Ascending aorta (tissue), 2 donors: ENCODE measurements at regions of chr16 and their contacts with region 1.

Region 1: GRCh38 chr16:30922960-30923535 is 324 bp upstream of the FBXL19 start:
- DNase-seq: peak; percentile 99 to 100
- H3K4me3 ChIP-seq: peak overlapping the region; percentile 71 to 82
- H3K27ac ChIP-seq: peak overlapping the region; percentile 95 to 97
- H3K4me1 ChIP-seq: peaks cover 3 to 4% of the 10 kb centered on the region in 2 donors
- H3K27me3 ChIP-seq: no peaks in the 10 kb centered on the region
- CTCF ChIP-seq: no peak

Region 2: GRCh38 chr16:30844671-30845449 is 78.2 kb before region 1 on chr16:
- intact Hi-C with region 1: loop called (anchors 1 kb)
- DNase-seq: peak in 1 of 2 donors; percentile 89
- H3K4me3 ChIP-seq: peak overlapping the region; percentile 17 to 59
- H3K27ac ChIP-seq: peak overlapping the region in 1 of 2 donors; percentile 48
- H3K4me1 ChIP-seq: peaks cover 3 to 6% of the 10 kb centered on the region in 2 donors
- H3K27me3 ChIP-seq: no peaks in the 10 kb centered on the region
- CTCF ChIP-seq: peak; percentile 69 to 91 (median 82)

Region 3: GRCh38 chr16:30893744-30894539 is 29.1 kb before region 1 on chr16 and contains the start of gene BCL7C:
- intact Hi-C with region 1: loop called (anchors 1 kb)
- DNase-seq: peak; percentile 70 to 96
- H3K4me3 ChIP-seq: peak within 1 kb of the TSS; percentile 87 to 93
- H3K27ac ChIP-seq: peak within 1 kb of the TSS; percentile 99
- H3K4me1 ChIP-seq: peaks cover 20 to 32% of the 10 kb centered on the region in 2 donors
- H3K27me3 ChIP-seq: no peaks in the 10 kb centered on the region
- CTCF ChIP-seq: peak; percentile 24 to 61 (median 53)
- total RNA-seq, gene BCL7C: 46.2 TPM

Region 4: DNA sequence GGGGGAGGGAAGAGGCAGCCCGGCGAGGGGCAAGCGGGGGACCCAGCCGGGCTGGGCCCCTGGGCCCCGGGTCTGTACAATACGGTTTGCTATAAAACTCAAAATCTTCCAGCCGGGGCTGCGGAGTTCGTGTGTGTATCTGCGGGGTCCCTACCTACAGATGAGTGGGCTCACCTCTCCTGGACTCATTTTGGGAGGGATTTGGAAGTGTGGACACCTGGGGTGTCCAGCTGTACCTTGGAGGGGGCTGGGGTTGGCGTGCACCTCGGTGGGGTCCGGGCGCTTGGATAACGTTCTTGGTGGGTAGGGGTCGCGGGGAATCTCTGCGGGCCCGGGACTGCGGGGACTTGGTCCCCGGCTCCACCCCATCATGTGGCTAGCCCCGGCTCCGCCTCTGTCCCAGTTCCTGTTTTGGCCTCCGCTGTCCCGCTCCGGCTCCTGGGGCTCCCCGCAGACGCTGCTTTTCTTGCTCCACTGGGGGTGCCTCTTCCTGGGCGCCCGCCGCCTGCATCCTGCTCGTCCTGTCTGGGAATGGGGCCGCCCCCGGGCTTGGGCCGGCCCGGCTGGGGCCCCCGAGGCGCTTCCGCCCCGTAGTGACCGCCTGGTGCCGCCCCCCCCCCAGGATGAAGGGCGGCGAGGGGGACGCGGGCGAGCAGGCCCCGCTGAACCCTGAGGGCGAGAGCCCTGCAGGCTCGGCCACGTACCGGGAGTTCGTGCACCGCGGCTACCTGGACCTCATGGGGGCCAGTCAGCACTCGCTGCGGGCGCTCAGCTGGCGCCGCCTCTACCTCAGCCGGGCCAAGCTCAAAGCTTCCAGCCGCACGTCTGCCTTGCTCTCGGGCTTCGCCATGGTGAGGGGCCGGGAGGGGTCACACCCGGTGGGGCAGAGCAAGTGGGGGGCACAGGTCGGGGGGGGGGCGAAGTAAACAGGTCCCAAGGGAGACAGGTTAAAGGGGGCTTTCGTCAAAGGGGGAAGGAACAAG is 25.9 kb after region 1 on chr16 and contains the start of gene ORAI3:
- intact Hi-C with region 1: loop called (anchors 2 kb)
- DNase-seq: peak in 1 of 2 donors; percentile 86
- H3K4me3 ChIP-seq: peak within 1 kb of the TSS; percentile 81 to 92
- H3K27ac ChIP-seq: peak within 1 kb of the TSS; percentile 90 to 93
- H3K4me1 ChIP-seq: peaks cover 11 to 33% of the 10 kb centered on the region in 2 donors
- H3K27me3 ChIP-seq: no peaks in the 10 kb centered on the region
- CTCF ChIP-seq: no peak
- total RNA-seq, gene ORAI3: 39.0 TPM